Mammary epithelial cell (primary cell): ENCODE measurements at regions of chr10 and their contacts with region 1.

Region 1: GRCh38 chr10:71740069-71740468 is 20.5 kb upstream of the C10orf105 start:
- DNase-seq: peak; percentile 78
- H3K4me3 ChIP-seq: no peak overlapping the region
- H3K27ac ChIP-seq: no peak overlapping the region
- H3K4me1 ChIP-seq: peaks cover 13% of the 10 kb centered on the region
- H3K27me3 ChIP-seq: no peaks in the 10 kb centered on the region
- CTCF ChIP-seq: peak; percentile 21 to 24

Region 2: DNA sequence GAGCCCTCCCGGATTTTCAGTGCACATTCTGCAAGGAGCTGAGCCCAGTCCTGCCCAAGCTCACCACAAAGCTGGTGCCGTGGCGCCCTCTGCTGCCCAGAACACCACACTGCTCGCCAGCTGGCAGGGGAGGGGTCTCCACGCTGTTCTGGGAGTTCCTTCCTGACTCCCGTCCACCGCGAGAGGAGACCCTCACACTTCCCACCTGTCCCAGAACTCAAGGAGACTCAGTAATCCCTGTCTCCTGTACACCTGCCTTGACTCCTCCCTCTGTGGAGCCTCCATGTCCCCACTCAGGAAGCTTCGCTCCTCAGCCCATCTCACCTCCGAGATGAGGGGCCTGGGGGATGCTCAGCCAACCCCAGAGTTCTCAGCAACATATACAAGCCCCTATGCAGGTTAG is 31.8 kb before region 1 on chr10:
- CTCF ChIA-PET with region 1: no interaction called
- dilution Hi-C with region 1: loop called (anchors 5 kb)
- in situ Hi-C with region 1: no loop called
- intact Hi-C with region 1: no loop called
- DNase-seq: no peak
- H3K4me3 ChIP-seq: no peak overlapping the region
- H3K27ac ChIP-seq: no peak overlapping the region
- H3K4me1 ChIP-seq: peaks cover 28% of the 10 kb centered on the region
- H3K27me3 ChIP-seq: no peaks in the 10 kb centered on the region
- CTCF ChIP-seq: peak; percentile 79 to 87

Region 3: DNA sequence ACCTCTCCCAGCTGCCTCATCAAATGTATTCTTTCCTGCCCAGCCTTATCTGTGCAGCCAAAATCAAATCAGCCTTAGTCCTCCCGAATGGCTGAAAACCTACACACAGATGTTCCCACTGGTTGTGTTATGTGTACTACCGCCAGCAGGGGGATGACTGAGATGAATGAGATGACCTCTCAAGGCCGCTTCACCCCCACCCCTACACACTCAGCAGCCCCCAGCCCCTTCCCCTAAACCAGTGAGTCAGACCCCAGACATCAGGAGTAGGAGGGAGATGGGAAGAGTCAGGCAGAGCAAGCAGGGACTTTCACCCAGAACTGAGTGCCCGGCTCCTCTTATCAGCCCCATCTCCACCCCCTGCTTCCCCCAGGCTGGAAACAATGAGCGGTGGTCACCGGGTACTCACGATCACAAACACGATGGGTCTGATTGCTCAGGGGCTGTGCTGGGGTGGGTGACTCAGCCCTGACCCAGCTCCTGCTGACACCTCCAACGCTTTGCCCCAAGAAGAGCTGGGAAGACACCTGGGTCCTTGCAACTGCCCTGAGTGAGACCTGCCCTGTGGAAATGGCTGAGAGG is 14.0 kb before region 1 on chr10:
- CTCF ChIA-PET with region 1: no interaction called
- dilution Hi-C with region 1: no loop called
- in situ Hi-C with region 1: no loop called
- intact Hi-C with region 1: loop called (anchors 1 kb)
- DNase-seq: peak; percentile 33
- H3K4me3 ChIP-seq: no peak overlapping the region
- H3K27ac ChIP-seq: no peak overlapping the region
- H3K4me1 ChIP-seq: peaks cover 27% of the 10 kb centered on the region
- H3K27me3 ChIP-seq: no peaks in the 10 kb centered on the region
- CTCF ChIP-seq: peak; percentile 38 to 39